ENCODE measurements at regions of chr4 and their contacts with region 1.

Region 1: DNA sequence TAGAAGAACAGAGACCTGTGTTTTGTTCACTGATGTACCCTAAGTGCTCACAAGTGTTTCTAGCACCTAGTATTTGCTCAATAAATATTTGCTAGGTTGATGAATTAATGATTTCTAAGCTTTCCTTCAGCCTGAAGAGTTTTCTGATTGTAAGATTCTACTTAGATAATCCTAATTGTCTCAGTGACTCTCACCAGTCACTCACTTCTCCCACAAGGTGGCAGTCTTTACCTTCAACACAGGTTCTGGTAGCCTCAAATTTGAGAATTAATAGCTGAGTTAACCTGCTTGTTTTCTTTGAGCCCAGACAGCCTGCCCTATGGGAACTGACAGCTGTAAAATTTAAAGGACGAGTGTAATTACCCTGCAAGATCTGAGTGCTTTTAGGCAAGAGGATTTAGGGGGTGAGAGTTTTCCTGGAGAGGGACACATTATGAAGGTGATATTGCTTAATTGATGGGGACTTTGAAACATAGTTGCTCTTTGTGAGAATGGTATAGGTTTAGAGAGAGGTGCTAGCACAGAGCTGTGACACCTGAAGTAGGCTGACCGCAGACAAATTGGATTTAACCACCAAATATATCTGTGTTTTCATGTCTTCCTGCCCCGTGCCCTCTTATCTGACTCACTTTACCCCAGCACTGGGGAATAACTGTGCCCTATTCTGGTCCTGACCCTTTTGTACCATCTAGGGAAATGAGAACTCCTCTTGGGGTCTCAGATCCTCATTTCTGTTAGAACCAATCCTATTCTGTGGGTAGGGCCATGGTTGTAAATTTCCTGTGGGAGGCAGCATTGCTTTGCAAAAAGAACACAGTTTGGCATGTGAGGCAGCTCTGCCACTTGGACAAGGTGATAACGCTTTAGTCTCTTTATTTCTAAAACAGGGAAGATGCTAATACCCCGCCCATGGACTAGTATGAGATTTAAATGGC is 27.7 kb downstream of the CD38 start:
- DNase-seq: no peak
- ATAC-seq: peak; percentile 62 to 86 (median 72)
- H3K4me3 ChIP-seq: peak overlapping the region; percentile 15
- H3K27ac ChIP-seq: peak overlapping the region; percentile 11
- H3K4me1 ChIP-seq: peaks cover 42% of the 10 kb centered on the region
- H3K27me3 ChIP-seq: no peaks in the 10 kb centered on the region
- CTCF ChIP-seq: peak; percentile 84

Region 2: DNA sequence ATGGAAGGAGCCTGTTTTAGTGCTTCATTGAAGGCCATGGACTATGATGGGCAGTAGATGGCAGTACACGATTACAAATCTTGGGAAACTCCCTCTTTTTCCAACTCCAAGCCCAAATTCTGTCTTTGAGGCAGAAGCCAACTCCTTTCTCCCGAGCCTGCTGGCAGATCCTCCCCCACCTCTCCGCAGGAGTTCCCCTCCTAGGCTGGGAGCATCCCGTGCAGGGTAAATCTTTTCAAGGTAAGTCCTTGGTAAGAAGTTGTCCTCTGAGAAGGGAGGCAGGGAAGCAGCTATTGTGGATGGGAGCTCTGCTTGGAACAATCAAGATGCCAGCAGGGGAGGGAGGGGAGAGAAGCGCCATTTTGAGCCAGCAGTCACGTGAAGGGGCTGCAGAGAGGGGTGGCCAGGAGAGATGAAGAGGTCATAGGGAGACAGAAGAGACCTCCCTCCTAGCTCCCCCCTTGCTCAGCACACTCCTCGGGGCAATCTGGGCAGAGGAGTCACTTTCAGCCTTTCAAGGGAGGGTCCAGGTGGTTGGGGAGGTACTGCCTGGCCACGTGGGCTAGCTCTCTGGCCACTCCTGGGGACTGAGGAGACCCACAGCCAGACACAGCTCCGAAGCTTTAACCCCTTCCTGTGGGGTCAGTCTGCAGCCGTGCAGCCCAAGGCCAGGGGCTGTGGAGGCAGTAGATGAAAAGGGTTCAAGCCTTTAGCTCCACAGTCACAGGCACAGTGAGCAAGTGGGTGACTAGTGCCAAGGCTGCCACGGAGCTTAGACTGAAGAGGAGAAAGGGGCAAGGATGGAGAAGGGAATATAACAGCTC is 326.5 kb before region 1 on chr4:
- intact Hi-C with region 1: loop called in 1 of 2 experiments (anchors 10 kb)
- DNase-seq: peak in 1 of 2 donors; percentile 58
- ATAC-seq: peak; percentile 71 to 94 (median 82)
- H3K4me3 ChIP-seq: peak overlapping the region; percentile 48
- H3K27ac ChIP-seq: peak overlapping the region; percentile 14
- H3K4me1 ChIP-seq: no peaks in the 10 kb centered on the region
- H3K27me3 ChIP-seq: no peaks in the 10 kb centered on the region
- CTCF ChIP-seq: peak; percentile 64

Region 3: DNA sequence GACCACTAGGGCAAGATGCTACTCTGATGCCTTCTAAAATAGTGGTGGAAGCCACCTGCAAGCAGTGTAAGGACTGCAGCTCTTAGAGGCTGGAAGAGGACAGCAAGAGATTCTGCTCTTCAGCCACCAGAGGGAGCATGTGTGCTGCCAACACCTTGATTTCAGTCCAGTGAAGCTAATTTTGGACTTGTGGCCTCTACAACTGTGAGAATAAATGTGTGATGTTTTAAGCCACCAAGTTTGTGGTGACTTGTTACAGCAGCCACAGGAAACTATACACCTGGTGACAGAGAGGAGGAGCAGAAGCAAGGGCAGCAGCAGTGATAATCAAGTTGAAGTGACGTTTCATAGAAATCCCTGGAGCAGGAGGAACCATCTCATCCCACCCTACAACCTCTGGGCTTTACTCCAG is 76.8 kb after region 1 on chr4:
- intact Hi-C with region 1: loop called (anchors 2 to 5 kb)
- DNase-seq: peak in 1 of 2 donors; percentile 57
- ATAC-seq: peak; percentile 83 to 97 (median 87)
- H3K4me3 ChIP-seq: no peak overlapping the region
- H3K27ac ChIP-seq: no peak overlapping the region
- H3K4me1 ChIP-seq: peaks cover 5% of the 10 kb centered on the region
- H3K27me3 ChIP-seq: no peaks in the 10 kb centered on the region
- CTCF ChIP-seq: peak; percentile 88

Region 4: DNA sequence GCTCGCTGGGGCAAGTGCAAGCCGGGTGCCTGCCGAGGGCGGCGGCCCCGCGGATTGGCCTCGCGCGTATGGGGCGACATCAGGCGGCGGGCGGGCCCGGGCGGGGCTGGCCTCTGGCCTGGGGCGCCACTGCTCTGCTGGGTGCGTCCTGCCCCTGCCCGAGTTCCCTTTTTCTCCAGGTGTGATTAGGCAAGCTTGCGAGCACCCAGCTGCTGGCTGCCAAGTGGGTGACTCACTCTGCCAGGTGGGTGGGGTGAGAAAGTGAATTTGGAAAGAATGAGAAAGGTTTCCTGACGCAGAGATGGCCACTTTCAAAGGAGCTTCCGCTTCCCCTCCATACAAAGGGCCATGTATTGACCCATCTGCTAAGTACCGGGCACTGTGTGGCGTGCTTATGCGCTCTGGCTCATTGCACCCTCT is 100.2 kb after region 1 on chr4:
- intact Hi-C with region 1: no loop called
- DNase-seq: no peak
- ATAC-seq: no peak
- H3K4me3 ChIP-seq: no peak overlapping the region
- H3K27ac ChIP-seq: no peak overlapping the region
- H3K4me1 ChIP-seq: no peaks in the 10 kb centered on the region
- H3K27me3 ChIP-seq: no peaks in the 10 kb centered on the region
- CTCF ChIP-seq: no peak

Region 5: GRCh38 chr4:15945516-15945915 is 139.7 kb after region 1 on chr4:
- intact Hi-C with region 1: no loop called
- DNase-seq: no peak
- ATAC-seq: no peak
- H3K4me3 ChIP-seq: no peak overlapping the region
- H3K27ac ChIP-seq: no peak overlapping the region
- H3K4me1 ChIP-seq: no peaks in the 10 kb centered on the region
- H3K27me3 ChIP-seq: no peaks in the 10 kb centered on the region
- CTCF ChIP-seq: no peak

Region 6: DNA sequence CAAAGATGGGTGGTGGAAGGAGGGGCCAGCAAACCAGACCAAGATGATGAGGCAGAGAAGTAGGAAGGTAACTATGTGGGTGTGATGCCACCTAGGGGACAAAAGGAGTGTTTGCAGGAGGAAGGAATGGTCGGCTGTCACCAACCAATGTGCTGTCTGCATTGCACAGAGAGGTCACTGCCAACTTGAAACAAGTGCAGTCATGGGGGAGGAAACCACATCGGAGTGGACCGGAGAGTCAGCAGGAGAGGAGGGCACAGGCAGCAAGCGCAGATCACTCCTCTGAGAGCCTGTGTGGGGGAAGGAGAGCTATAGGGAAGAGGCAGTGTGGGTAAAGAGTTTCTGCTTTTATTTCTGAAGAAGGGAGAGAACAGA is 195.6 kb after region 1 on chr4:
- intact Hi-C with region 1: loop called (anchors 1 to 5 kb)
- DNase-seq: peak in 1 of 2 donors; percentile 29
- ATAC-seq: peak; percentile 91 to 100 (median 96)
- H3K4me3 ChIP-seq: no peak overlapping the region
- H3K27ac ChIP-seq: no peak overlapping the region
- H3K4me1 ChIP-seq: peaks cover 3% of the 10 kb centered on the region
- H3K27me3 ChIP-seq: no peaks in the 10 kb centered on the region
- CTCF ChIP-seq: peak; percentile 85

Region 7: GRCh38 chr4:16270454-16271328 is 464.8 kb after region 1 on chr4:
- intact Hi-C with region 1: loop called in 1 of 2 experiments (anchors 10 kb)
- DNase-seq: no peak
- ATAC-seq: no peak
- H3K4me3 ChIP-seq: no peak overlapping the region
- H3K27ac ChIP-seq: no peak overlapping the region
- H3K4me1 ChIP-seq: no peaks in the 10 kb centered on the region
- H3K27me3 ChIP-seq: no peaks in the 10 kb centered on the region
- CTCF ChIP-seq: no peak